Caco-2 (cell line): ENCODE measurements at regions of chr13 and their contacts with region 1.

Region 1: GRCh38 chr13:89660752-89661151 is 1686.7 kb upstream of the MIR17HG start:
- DNase-seq: no peak
- H3K4me3 ChIP-seq: no peak overlapping the region
- H3K4me3 Mint-ChIP-seq: no peak overlapping the region
- H3K27ac Mint-ChIP-seq: no peak overlapping the region
- H3K4me1 ChIP-seq: no peaks in the 10 kb centered on the region
- H3K4me1 Mint-ChIP-seq: no peaks in the 10 kb centered on the region
- H3K27me3 ChIP-seq: no peaks in the 10 kb centered on the region
- H3K27me3 Mint-ChIP-seq: no peaks in the 10 kb centered on the region
- CTCF ChIP-seq: no peak

Region 2: DNA sequence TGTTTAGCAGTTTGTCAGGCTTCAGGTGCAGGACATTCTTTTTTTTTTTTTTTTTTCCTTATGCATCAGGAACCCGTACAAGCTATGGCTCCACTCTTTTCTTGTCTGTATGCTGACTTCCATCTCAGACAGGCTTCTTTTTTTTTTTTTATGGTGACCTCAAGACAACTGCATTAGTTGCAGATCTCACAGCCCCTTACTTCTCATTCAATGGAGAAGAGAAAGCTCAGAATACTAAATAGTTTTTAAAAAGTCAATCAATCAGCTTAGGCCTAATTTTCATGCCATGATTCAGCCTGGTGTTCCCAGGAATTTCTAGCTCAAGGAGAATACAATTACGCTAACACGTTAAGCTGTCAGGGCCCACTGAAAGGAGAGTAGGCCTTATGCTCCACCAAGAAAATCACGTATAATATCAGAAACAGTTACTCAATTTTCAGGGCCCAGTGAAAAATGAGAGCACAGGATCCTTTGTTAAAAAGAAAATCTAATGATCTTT is 90.7 kb after region 1 on chr13:
- CTCF ChIA-PET with region 1: no interaction called
- POLR2A ChIA-PET with region 1: interaction called, 10 read pairs
- intact Hi-C with region 1: no loop called
- DNase-seq: no peak
- H3K4me3 ChIP-seq: no peak overlapping the region
- H3K4me3 Mint-ChIP-seq: no peak overlapping the region
- H3K27ac Mint-ChIP-seq: no peak overlapping the region
- H3K4me1 ChIP-seq: no peaks in the 10 kb centered on the region
- H3K4me1 Mint-ChIP-seq: no peaks in the 10 kb centered on the region
- H3K27me3 ChIP-seq: no peaks in the 10 kb centered on the region
- H3K27me3 Mint-ChIP-seq: no peaks in the 10 kb centered on the region
- CTCF ChIP-seq: no peak

Region 3: DNA sequence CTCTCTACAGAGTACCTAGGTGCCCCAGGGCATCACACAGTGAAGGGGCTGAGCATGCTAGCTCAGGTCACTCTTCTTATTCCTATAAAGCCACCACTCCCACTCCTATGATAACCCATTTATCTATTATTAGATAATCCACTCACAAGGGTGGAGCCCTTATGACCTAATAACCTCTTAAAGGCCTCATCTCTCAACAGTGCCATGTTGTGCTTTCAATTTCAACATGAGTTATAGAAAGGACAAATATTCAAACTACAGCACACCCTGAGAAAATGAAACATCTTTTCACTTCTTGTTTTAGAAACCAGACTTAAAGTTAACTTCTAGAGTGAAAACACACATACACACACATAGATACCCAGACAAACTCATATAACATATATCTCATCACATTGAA is 191.8 kb after region 1 on chr13:
- CTCF ChIA-PET with region 1: no interaction called
- POLR2A ChIA-PET with region 1: no interaction called
- intact Hi-C with region 1: no loop called
- DNase-seq: no peak
- H3K4me3 ChIP-seq: no peak overlapping the region
- H3K4me3 Mint-ChIP-seq: no peak overlapping the region
- H3K27ac Mint-ChIP-seq: no peak overlapping the region
- H3K4me1 ChIP-seq: no peaks in the 10 kb centered on the region
- H3K4me1 Mint-ChIP-seq: no peaks in the 10 kb centered on the region
- H3K27me3 ChIP-seq: no peaks in the 10 kb centered on the region
- H3K27me3 Mint-ChIP-seq: no peaks in the 10 kb centered on the region
- CTCF ChIP-seq: no peak